SK-N-SH (cell line): ENCODE measurements at regions of chr18 and their contacts with region 1.

Region 1: DNA sequence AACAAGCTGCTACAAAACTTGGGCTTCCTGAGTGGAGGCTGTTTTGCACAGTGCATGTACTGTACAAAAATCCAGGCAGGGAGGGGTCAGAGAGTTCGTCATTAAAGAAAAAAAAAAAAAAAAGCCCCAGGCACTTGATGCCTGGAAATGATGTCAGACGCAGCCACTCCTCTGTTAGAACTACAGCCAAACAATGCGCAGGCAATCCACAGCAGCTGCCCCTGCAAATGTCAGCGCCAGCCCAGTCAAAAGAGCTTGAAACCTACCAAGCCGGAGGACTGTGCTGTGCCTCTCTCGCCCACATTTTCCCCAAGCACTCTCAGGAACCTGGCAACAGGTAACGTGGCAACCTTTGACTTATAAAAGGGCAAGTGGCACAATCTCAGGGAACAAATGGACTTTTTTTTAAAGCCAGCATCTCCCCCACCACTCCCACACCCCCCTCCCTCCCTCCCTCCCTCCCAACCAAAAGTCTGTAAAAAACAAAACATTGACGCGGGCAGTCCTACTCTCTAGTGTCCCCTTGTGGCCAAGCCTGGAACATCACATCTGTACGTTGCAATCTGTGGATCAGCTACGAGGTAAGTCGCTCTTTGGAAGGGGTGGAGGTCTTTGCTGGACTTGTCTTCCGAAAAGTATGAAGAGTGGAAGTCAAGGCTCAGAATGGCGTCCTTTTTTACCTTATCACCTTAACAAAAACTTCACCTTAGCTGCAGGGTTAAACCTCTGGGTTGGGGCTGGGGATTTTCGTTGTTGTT is 144.1 kb downstream of the TGIF1 start:
- DNase-seq: peak; percentile 74
- H3K4me3 ChIP-seq: peak overlapping the region; percentile 53 to 67
- H3K27ac ChIP-seq: peak overlapping the region; percentile 100
- H3K4me1 ChIP-seq: peaks cover 36 to 56% of the 10 kb centered on the region in 2 experiments
- H3K27me3 ChIP-seq: no peaks in the 10 kb centered on the region
- CTCF ChIP-seq: peak; percentile 73
- EP300 ChIP-seq: peak in 1 of 2 experiments; percentile 26; a peak in 3 of 4 replicates
- RAD21 ChIP-seq: peak; percentile 70

Region 2: GRCh38 chr18:3281456-3282400 is 312.4 kb before region 1 on chr18:
- CTCF ChIA-PET with region 1: interaction called, 41 read pairs
- POLR2A ChIA-PET with region 1: interaction called, 10 read pairs
- DNase-seq: peak; percentile 59
- H3K4me3 ChIP-seq: no peak overlapping the region; a peak in 1 of 4 replicates
- H3K27ac ChIP-seq: peak overlapping the region; percentile 30 to 53; a peak in 3 of 4 replicates
- H3K4me1 ChIP-seq: peaks cover 4 to 25% of the 10 kb centered on the region in 2 experiments; a peak in 3 of 4 replicates
- H3K27me3 ChIP-seq: no peaks in the 10 kb centered on the region
- CTCF ChIP-seq: peak; percentile 71
- EP300 ChIP-seq: no peak
- RAD21 ChIP-seq: peak; percentile 89

Region 3: GRCh38 chr18:3447895-3448837 is 145.9 kb before region 1 on chr18:
- CTCF ChIA-PET with region 1: interaction called, 66 read pairs
- POLR2A ChIA-PET with region 1: interaction called, 6 read pairs
- DNase-seq: peak; percentile 88
- H3K4me3 ChIP-seq: peak overlapping the region; percentile 74 to 93
- H3K27ac ChIP-seq: peak overlapping the region; percentile 98 to 99
- H3K4me1 ChIP-seq: peaks cover 15 to 20% of the 10 kb centered on the region in 2 experiments
- H3K27me3 ChIP-seq: no peaks in the 10 kb centered on the region
- CTCF ChIP-seq: peak; percentile 26
- EP300 ChIP-seq: peak; percentile 36 to 84; a peak in 3 of 4 replicates
- RAD21 ChIP-seq: no peak; the same call in none of the 2 replicates

Region 4: DNA sequence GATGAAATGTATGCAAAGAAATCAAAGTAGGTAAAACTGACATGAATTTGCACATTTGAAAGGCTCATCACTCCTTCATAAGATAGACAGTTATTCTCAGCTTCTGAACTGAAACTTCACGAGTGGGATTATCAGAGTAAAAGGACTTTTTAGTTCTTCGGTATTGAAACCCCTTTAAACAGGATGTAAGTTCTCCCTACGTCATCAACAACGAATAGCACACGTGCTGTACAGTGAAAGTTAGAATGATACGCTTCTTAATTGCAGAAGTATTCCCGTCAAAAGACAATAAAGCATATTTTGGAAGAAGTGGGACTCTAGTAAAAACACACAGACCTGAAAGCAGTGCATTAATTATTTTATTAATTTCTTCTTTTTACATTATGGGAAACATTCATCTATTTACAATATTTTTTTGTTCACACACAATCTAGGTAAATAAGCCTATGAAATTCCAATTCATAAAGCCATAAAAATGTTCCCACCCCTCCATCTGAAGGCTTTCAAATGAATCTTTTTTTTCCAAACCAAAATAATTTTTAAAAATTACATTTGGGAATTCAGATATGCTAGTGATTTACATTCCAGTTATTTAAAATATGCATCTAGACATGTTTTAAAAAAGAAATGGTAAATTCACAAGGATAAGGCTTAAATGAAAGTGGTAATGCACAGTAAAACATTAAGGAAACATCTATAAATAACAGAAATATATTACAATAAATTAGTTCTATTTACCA is 98.2 kb before region 1 on chr18:
- CTCF ChIA-PET with region 1: interaction called, 10 read pairs
- POLR2A ChIA-PET with region 1: no interaction called
- DNase-seq: no peak
- H3K4me3 ChIP-seq: no peak overlapping the region
- H3K27ac ChIP-seq: no peak overlapping the region
- H3K4me1 ChIP-seq: peaks cover 0 to 8% of the 10 kb centered on the region in 2 experiments; a peak in 2 of 4 replicates
- H3K27me3 ChIP-seq: no peaks in the 10 kb centered on the region
- CTCF ChIP-seq: no peak
- EP300 ChIP-seq: no peak
- RAD21 ChIP-seq: no peak

Region 5: DNA sequence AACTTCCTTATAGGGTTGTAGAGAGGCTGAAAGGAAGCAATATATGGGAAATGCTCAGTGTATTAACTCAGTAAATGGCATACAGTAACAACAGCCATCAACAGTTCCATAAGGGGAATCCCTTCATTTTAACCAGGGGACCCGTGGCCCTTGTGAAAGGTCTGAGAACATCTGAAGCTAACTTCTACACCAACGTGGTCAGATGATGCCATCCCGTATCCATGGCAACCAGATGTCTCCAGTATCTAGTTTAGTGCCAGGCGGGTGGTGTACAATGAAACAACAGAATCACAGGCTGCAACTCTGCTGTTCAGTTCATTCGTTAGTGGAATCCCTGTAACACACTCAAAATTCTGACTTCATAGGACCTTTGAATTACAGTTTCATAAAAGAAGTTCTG is 18.2 kb after region 1 on chr18:
- CTCF ChIA-PET with region 1: interaction called, 13 read pairs
- POLR2A ChIA-PET with region 1: interaction called, 6 read pairs
- DNase-seq: no peak
- H3K4me3 ChIP-seq: no peak overlapping the region
- H3K27ac ChIP-seq: no peak overlapping the region; a peak in 1 of 4 replicates
- H3K4me1 ChIP-seq: peaks cover 4 to 7% of the 10 kb centered on the region in 2 experiments; a peak in 2 of 4 replicates
- H3K27me3 ChIP-seq: no peaks in the 10 kb centered on the region
- CTCF ChIP-seq: no peak
- EP300 ChIP-seq: no peak
- RAD21 ChIP-seq: no peak